Tibial artery (tissue), 4 donors: ENCODE measurements at regions of chr20 and their contacts with region 1.

Region 1: GRCh38 chr20:37384683-37385174 is 38.8 kb downstream of the SRC start:
- DNase-seq: peak; percentile 38 to 77
- H3K4me3 ChIP-seq: peak overlapping the region; percentile 46 to 49
- H3K27ac ChIP-seq: peak overlapping the region; percentile 36 to 41
- H3K4me1 ChIP-seq: peaks cover 0 to 17% (median 11%) of the 10 kb centered on the region in 4 donors
- H3K27me3 ChIP-seq: no peaks in the 10 kb centered on the region
- CTCF ChIP-seq: peak; percentile 92 to 96

Region 2: GRCh38 chr20:37192137-37192854 is 192.4 kb before region 1 on chr20:
- intact Hi-C with region 1: loop called (anchors 10 kb)
- DNase-seq: peak; percentile 90 to 91
- H3K4me3 ChIP-seq: no peak overlapping the region
- H3K27ac ChIP-seq: no peak overlapping the region
- H3K4me1 ChIP-seq: peaks cover 0 to 14% (median 8%) of the 10 kb centered on the region in 4 donors
- H3K27me3 ChIP-seq: no peaks in the 10 kb centered on the region
- CTCF ChIP-seq: peak; percentile 91 to 93

Region 3: DNA sequence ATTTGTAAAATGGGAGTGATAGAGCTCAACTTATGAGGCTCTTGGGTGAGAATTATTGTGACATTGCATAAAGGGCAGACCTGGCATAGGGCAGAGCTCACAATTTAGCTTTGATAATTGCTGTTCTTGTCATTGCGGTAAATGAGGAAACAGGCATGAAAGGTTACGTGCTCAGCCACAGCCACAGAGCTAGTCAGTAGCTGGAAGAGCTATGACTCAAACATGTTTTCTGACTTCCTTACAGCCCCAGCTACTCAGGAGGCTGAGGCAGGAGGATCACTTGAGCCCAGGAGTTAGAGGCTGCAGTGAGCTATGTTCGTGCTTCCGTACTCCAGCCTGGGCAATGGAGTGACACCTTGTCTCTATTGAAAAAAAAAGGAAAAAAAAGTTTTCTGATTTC is 119.6 kb before region 1 on chr20:
- intact Hi-C with region 1: loop called (anchors 5 kb)
- DNase-seq: no peak
- H3K4me3 ChIP-seq: no peak overlapping the region
- H3K27ac ChIP-seq: no peak overlapping the region
- H3K4me1 ChIP-seq: no peaks in the 10 kb centered on the region
- H3K27me3 ChIP-seq: peaks cover 0 to 16% of the 10 kb centered on the region in 2 donors
- CTCF ChIP-seq: no peak

Region 4: DNA sequence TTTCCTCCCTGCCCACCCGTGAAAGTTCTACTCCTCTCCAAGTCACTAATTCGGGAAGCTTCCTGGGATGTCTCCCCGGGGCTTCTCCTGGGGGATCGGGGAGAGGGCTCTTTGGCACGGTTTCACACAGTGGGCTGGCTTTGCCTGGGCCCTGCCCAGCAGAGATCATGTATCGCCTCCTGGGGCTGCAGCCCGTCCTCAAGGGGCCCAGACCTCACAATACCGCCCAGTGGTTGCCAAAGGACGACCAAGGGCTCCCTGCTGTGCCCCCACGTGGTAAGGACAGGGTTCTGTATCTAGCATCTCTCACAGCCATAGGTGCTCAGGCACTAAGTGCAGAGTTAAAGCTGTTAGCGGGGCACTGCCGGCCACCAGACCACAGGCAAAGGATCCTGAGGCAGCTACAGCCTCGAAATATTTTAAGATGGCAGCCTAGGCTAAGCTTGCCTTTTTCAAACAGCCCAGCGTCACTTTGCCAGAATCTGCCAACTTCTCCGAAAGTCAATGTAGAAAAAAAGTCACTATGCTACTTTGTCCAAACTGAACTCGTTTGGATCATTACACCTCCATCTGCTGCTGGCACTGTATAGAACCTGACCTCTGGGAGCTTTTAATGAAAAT is 134.9 kb after region 1 on chr20:
- intact Hi-C with region 1: loop called (anchors 5 kb)
- DNase-seq: no peak
- H3K4me3 ChIP-seq: no peak overlapping the region
- H3K27ac ChIP-seq: no peak overlapping the region
- H3K4me1 ChIP-seq: peaks cover 0 to 38% (median 26%) of the 10 kb centered on the region in 4 donors
- H3K27me3 ChIP-seq: no peaks in the 10 kb centered on the region
- CTCF ChIP-seq: no peak

Region 5: GRCh38 chr20:37534401-37535157 is 149.8 kb after region 1 on chr20:
- intact Hi-C with region 1: loop called (anchors 5 kb)
- DNase-seq: peak in 1 of 2 donors; percentile 38
- H3K4me3 ChIP-seq: no peak overlapping the region
- H3K27ac ChIP-seq: no peak overlapping the region
- H3K4me1 ChIP-seq: no peaks in the 10 kb centered on the region
- H3K27me3 ChIP-seq: peaks cover 0 to 9% of the 10 kb centered on the region in 2 donors
- CTCF ChIP-seq: peak; percentile 82 to 94